GM12878 (cell line): ENCODE measurements at regions of chr1 and their contacts with region 1.

Region 1: DNA sequence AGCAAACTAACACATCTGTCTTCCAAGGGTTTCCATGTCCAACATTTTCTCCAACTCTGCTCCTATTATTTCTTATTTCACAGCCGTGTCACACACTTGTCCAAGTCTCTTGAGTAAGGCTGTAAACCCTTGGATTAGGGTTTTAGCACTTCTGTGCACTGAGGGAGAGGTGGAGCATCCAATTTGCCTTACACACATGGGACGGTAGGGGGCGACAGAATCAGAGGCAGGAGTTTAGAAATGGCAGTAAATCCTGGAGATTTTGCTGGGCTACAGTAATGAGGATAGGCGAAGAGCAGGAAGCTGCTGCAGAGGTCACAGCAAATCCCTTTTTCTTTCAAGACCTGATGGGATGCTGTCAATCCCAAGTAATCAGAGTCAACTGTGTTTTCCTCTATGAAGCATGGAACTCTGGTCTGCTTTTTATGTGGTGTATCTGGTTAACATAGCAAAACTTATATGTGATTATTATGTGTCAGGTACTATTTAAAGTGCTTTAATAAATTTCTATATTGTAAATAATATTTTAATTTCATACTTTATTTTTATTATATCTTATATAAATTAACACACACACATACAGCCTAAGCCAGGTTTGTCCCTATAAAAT is 15.4 kb upstream of the LCE5A start:
- DNase-seq: no peak
- ATAC-seq: peak; percentile 72
- H3K4me3 ChIP-seq: no peak overlapping the region
- H3K27ac ChIP-seq: no peak overlapping the region
- H3K4me1 ChIP-seq: no peaks in the 10 kb centered on the region
- H3K27me3 ChIP-seq: no peaks in the 10 kb centered on the region
- CTCF ChIP-seq: peak; percentile 55 to 90 (median 82)
- EP300 ChIP-seq: no peak
- POLR2A ChIP-seq: no peak
- RAD21 ChIP-seq: peak; percentile 59

Region 2: GRCh38 chr1:152426731-152427130 is 68.4 kb before region 1 on chr1:
- CTCF ChIA-PET with region 1: no interaction called
- POLR2A ChIA-PET with region 1: no interaction called
- RAD21 ChIA-PET with region 1: no interaction called
- SMC1A ChIA-PET with region 1: no interaction called
- in situ Hi-C with region 1: no loop called
- intact Hi-C with region 1: no loop called
- DNase-seq: no peak
- ATAC-seq: no peak
- H3K4me3 ChIP-seq: no peak overlapping the region
- H3K27ac ChIP-seq: no peak overlapping the region
- H3K4me1 ChIP-seq: no peaks in the 10 kb centered on the region
- H3K27me3 ChIP-seq: no peaks in the 10 kb centered on the region
- CTCF ChIP-seq: no peak
- EP300 ChIP-seq: no peak
- POLR2A ChIP-seq: no peak
- RAD21 ChIP-seq: no peak

Region 3: GRCh38 chr1:152533327-152533938 is 38.3 kb after region 1 on chr1:
- CTCF ChIA-PET with region 1: interaction called, 11 read pairs
- POLR2A ChIA-PET with region 1: no interaction called
- RAD21 ChIA-PET with region 1: interaction called, 3 read pairs
- SMC1A ChIA-PET with region 1: interaction called, 3 read pairs
- in situ Hi-C with region 1: no loop called
- intact Hi-C with region 1: loop called (anchors 2 kb)
- DNase-seq: no peak
- ATAC-seq: peak; percentile 52; the same call in 1 of the 3 replicates
- H3K4me3 ChIP-seq: no peak overlapping the region
- H3K27ac ChIP-seq: no peak overlapping the region
- H3K4me1 ChIP-seq: no peaks in the 10 kb centered on the region
- H3K27me3 ChIP-seq: peaks cover 0 to 3% of the 10 kb centered on the region in 2 experiments; a peak in 1 of 4 replicates
- CTCF ChIP-seq: peak; percentile 66 to 77 (median 75)
- EP300 ChIP-seq: no peak
- POLR2A ChIP-seq: no peak
- RAD21 ChIP-seq: peak; percentile 70

Region 4: DNA sequence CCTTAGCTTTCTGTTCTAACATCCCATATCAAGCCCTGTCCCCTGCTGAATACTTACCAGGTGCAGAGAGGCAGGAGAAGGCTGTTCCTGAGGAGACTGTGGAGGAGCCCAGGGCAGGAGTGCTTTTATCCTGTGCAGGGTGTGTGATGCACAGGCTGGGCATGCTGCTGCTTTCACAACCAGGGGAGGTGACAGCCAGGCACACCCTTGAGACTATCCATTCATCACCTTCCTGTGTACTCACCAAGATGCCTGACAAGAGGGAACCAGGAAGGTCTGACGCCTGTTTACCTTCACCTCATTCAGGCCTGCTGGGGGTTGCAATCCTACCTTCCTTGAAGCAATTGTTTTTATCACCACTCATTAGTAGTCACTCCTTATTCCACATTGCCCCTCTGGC is 71.5 kb after region 1 on chr1 and contains the start of gene LCE3E:
- CTCF ChIA-PET with region 1: no interaction called
- POLR2A ChIA-PET with region 1: no interaction called
- RAD21 ChIA-PET with region 1: no interaction called
- SMC1A ChIA-PET with region 1: no interaction called
- in situ Hi-C with region 1: no loop called
- intact Hi-C with region 1: no loop called
- DNase-seq: no peak
- ATAC-seq: no peak
- H3K4me3 ChIP-seq: no peak within 1 kb of the TSS
- H3K27ac ChIP-seq: no peak within 1 kb of the TSS
- H3K4me1 ChIP-seq: no peaks in the 10 kb centered on the region
- H3K27me3 ChIP-seq: no peaks in the 10 kb centered on the region
- CTCF ChIP-seq: no peak
- EP300 ChIP-seq: no peak
- POLR2A ChIP-seq: no peak
- RAD21 ChIP-seq: no peak
- polyA plus RNA-seq, gene LCE3E: not detected

Region 5: GRCh38 chr1:152623203-152623844 is 128.2 kb after region 1 on chr1:
- CTCF ChIA-PET with region 1: no interaction called
- POLR2A ChIA-PET with region 1: no interaction called
- RAD21 ChIA-PET with region 1: no interaction called
- SMC1A ChIA-PET with region 1: interaction called, 5 read pairs
- in situ Hi-C with region 1: no loop called
- intact Hi-C with region 1: loop called (anchors 10 kb)
- DNase-seq: no peak
- ATAC-seq: peak; percentile 76
- H3K4me3 ChIP-seq: no peak overlapping the region
- H3K27ac ChIP-seq: no peak overlapping the region
- H3K4me1 ChIP-seq: no peaks in the 10 kb centered on the region
- H3K27me3 ChIP-seq: no peaks in the 10 kb centered on the region
- CTCF ChIP-seq: peak; percentile 33 to 52 (median 46)
- EP300 ChIP-seq: no peak
- POLR2A ChIP-seq: no peak
- RAD21 ChIP-seq: no peak